CD4-positive, alpha-beta T cell (primary cell): ENCODE measurements at regions of chr1 and their contacts with region 1.

Region 1: DNA sequence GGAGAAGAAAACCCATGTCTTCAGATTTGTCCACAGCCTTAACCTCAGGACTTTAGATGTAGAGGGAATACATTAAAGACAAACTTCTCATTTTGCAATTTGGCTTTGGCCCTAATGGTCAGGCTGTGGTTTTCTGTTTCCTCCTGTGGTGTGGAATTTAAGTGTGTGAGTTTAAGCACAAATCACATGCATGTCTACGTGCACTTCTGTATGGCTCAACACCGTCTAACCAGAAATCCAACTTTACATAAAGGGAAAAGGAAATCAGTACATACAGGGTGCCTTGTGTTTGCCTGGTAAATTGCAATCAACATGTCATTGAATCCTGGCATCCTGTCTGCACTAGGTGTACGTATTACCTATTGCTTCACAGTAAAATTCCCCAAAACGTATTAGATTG is 1.2 kb upstream of the ZNF124 start:
- DNase-seq: peak in 2 of 14 experiments; percentile 27 to 29
- ATAC-seq: no peak
- H3K4me3 ChIP-seq: no peak overlapping the region
- H3K4me3 Mint-ChIP-seq: peak overlapping the region; percentile 66
- H3K27ac ChIP-seq: no peak overlapping the region
- H3K27ac Mint-ChIP-seq: no peak overlapping the region
- H3K4me1 ChIP-seq: peaks cover 4% of the 10 kb centered on the region
- H3K4me1 Mint-ChIP-seq: peaks cover 6% of the 10 kb centered on the region
- H3K27me3 ChIP-seq: no peaks in the 10 kb centered on the region
- H3K27me3 Mint-ChIP-seq: no peaks in the 10 kb centered on the region
- CTCF ChIP-seq: no peak

Region 2: GRCh38 chr1:246658567-246658966 is 514.4 kb before region 1 on chr1:
- CTCF ChIA-PET with region 1: no interaction called
- POLR2A ChIA-PET with region 1: no interaction called
- intact Hi-C with region 1: no loop called
- DNase-seq: no peak
- ATAC-seq: no peak
- H3K4me3 ChIP-seq: no peak overlapping the region
- H3K4me3 Mint-ChIP-seq: no peak overlapping the region
- H3K27ac ChIP-seq: no peak overlapping the region
- H3K27ac Mint-ChIP-seq: no peak overlapping the region
- H3K4me1 ChIP-seq: no peaks in the 10 kb centered on the region
- H3K4me1 Mint-ChIP-seq: peaks cover 11% of the 10 kb centered on the region
- H3K27me3 ChIP-seq: no peaks in the 10 kb centered on the region
- H3K27me3 Mint-ChIP-seq: no peaks in the 10 kb centered on the region
- CTCF ChIP-seq: no peak

Region 3: DNA sequence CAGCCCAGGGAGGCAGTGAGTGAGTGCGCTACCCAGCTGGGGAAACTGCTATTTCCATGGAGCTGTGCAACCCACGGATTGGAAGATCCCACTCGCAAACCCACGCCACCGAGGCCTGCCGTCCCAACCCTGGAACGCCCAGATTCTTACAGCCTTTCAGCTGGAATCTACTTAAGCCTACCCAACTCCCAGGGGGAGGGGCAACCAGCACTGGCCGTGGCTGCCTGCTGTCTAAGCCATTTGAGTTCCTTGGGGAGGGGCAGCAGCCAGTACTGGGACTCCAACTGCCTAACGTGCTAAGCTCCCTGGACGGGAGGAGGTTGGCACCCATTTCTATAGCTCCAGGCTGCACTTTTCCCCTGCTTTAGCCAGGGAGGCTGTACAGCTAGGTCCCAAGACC is 41.8 kb before region 1 on chr1:
- CTCF ChIA-PET with region 1: no interaction called
- POLR2A ChIA-PET with region 1: interaction called, 3 read pairs
- intact Hi-C with region 1: loop called in 1 of 2 experiments (anchors 2 kb)
- DNase-seq: no peak
- ATAC-seq: no peak
- H3K4me3 ChIP-seq: no peak overlapping the region
- H3K4me3 Mint-ChIP-seq: no peak overlapping the region
- H3K27ac ChIP-seq: no peak overlapping the region
- H3K27ac Mint-ChIP-seq: no peak overlapping the region
- H3K4me1 ChIP-seq: no peaks in the 10 kb centered on the region
- H3K4me1 Mint-ChIP-seq: peaks cover 8% of the 10 kb centered on the region
- H3K27me3 ChIP-seq: no peaks in the 10 kb centered on the region
- H3K27me3 Mint-ChIP-seq: no peaks in the 10 kb centered on the region
- CTCF ChIP-seq: no peak

Region 4: DNA sequence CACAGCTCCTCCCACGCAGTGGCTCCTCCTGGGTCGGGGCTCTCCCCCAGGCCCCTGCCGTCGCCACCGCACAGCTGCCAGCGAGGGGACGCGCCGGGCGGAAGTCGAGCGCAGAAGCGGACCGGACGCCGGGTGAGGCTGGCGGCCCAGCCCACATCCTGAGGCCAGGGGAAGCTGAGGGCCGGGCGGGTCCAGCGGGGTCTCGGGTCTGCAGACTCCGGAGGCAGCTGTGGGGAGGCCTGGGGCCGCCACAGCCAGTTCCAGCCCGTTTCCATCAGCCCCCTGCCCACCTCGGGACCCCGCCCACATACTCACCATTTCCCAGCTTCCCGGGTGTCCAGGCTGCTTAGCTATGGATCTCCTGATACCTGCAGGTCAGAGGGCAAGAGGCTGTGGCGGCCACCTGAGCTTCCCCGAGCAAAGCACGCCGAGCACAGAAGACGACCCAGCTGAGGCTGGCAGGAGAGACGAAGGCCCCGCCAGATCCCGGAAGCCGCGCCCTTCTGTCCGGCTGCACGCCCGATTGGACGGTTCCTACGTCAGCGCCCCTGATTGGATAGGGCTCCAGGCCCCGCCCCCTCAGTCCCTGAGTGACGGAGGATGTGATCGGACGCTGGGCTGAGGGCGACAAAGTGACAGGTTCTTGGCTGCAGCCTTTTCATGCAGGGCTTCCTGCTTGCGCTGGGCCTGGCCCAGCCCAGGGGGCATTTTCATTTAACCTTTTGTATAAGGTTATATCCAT is 37.6 kb after region 1 on chr1:
- CTCF ChIA-PET with region 1: no interaction called
- POLR2A ChIA-PET with region 1: no interaction called
- intact Hi-C with region 1: loop called (anchors 2 to 5 kb)
- DNase-seq: peak; percentile 83 to 97 (median 92)
- ATAC-seq: peak; percentile 99
- H3K4me3 ChIP-seq: peak overlapping the region; percentile 79
- H3K4me3 Mint-ChIP-seq: peak overlapping the region; percentile 98
- H3K27ac ChIP-seq: peak overlapping the region; percentile 63 to 79
- H3K27ac Mint-ChIP-seq: peak overlapping the region; percentile 96
- H3K4me1 ChIP-seq: peaks cover 39% of the 10 kb centered on the region
- H3K4me1 Mint-ChIP-seq: peaks cover 76% of the 10 kb centered on the region
- H3K27me3 ChIP-seq: no peaks in the 10 kb centered on the region
- H3K27me3 Mint-ChIP-seq: no peaks in the 10 kb centered on the region
- CTCF ChIP-seq: no peak

Region 5: DNA sequence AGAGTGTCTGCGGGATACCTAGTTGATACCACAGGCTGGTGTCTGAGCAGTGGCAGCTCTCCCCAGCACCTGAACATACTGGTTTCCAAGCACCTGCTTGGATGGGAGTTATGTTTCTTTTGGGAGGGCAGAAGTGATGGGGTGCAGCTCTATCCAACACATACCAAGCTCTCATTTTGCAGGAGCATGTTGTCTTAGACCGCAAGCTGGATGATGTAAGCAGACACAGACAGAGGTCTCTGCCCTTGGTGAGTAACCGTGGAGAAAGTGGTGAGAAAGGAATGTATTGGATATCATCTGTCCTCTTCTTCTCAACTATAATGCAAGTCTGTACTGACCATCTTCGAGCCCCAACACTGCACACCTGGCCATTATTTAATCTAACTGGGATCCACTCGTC is 121.3 kb after region 1 on chr1:
- CTCF ChIA-PET with region 1: no interaction called
- POLR2A ChIA-PET with region 1: no interaction called
- intact Hi-C with region 1: no loop called
- DNase-seq: no peak
- ATAC-seq: no peak
- H3K4me3 ChIP-seq: no peak overlapping the region
- H3K4me3 Mint-ChIP-seq: no peak overlapping the region
- H3K27ac ChIP-seq: no peak overlapping the region
- H3K27ac Mint-ChIP-seq: no peak overlapping the region
- H3K4me1 ChIP-seq: no peaks in the 10 kb centered on the region
- H3K4me1 Mint-ChIP-seq: no peaks in the 10 kb centered on the region
- H3K27me3 ChIP-seq: no peaks in the 10 kb centered on the region
- H3K27me3 Mint-ChIP-seq: no peaks in the 10 kb centered on the region
- CTCF ChIP-seq: no peak